ENCODE measurements at regions of chr12 and their contacts with region 1.

Region 1: GRCh38 chr12:50142993-50143392 is 24.2 kb downstream of the CERS5 start:
- DNase-seq: peak; percentile 74 to 81
- H3K4me3 ChIP-seq: no peak overlapping the region
- H3K4me3 Mint-ChIP-seq: peak overlapping the region; percentile 53
- H3K27ac Mint-ChIP-seq: peak overlapping the region; percentile 33
- H3K4me1 ChIP-seq: peaks cover 29% of the 10 kb centered on the region
- H3K4me1 Mint-ChIP-seq: peaks cover 23% of the 10 kb centered on the region
- H3K27me3 ChIP-seq: no peaks in the 10 kb centered on the region
- H3K27me3 Mint-ChIP-seq: no peaks in the 10 kb centered on the region
- CTCF ChIP-seq: no peak

Region 2: DNA sequence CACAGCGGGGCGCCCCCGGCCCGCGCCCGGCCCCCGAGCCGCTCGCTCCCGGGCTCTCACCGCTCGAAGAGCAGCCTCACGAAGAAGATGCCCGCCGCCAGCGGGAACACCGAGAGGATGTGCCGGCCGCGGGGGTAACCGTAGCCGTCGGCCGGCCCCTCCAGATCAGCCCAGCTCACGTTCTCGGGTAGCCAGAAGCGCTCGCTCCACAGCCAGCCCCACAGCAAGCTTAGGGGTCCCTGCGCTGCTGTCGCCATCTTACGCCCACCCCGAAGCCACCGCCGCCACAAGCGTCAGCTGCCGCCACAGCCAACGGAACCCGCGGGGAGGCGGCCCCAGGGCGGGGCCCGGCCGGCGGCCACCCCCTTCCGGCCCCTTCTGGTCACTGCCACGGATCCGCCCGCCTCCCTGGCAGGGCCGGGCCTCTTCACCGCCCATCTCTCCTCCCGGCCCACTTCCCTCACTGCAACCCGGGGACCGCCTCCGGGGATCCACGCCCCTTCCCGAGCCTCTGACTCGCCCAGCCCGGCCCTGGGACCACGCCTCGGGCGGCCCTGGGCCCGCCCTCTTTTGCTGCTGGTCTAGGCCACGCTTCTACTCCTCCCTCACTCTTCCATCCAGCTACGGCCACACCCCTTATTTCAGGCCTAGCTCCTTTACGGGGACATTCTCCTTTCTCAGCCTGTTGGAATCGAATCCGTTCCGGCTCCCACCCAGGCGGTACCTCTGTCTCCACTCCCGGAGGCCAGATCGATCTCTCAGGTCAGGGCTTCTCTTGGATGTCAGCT is 24.2 kb after region 1 on chr12 and contains the start of gene CERS5:
- CTCF ChIA-PET with region 1: interaction called, 5 read pairs
- POLR2A ChIA-PET with region 1: interaction called, 6 read pairs
- intact Hi-C with region 1: loop called (anchors 1 kb)
- DNase-seq: peak; percentile 99 to 100
- H3K4me3 ChIP-seq: peak within 1 kb of the TSS; percentile 63
- H3K4me3 Mint-ChIP-seq: peak within 1 kb of the TSS; percentile 80
- H3K27ac Mint-ChIP-seq: peak within 1 kb of the TSS; percentile 77
- H3K4me1 ChIP-seq: peaks cover 11% of the 10 kb centered on the region; the same call in 1 of the 2 replicates
- H3K4me1 Mint-ChIP-seq: peaks cover 8% of the 10 kb centered on the region
- H3K27me3 ChIP-seq: no peaks in the 10 kb centered on the region
- H3K27me3 Mint-ChIP-seq: no peaks in the 10 kb centered on the region
- CTCF ChIP-seq: peak in 1 of 2 experiments; percentile 64
- total RNA-seq, gene CERS5: 61.6 and 62.6 TPM in 2 replicates

Measured in Caco-2 (cell line).